HAP-1 (cell line): ENCODE measurements at regions of chr11 and their contacts with region 1.

Region 1: DNA sequence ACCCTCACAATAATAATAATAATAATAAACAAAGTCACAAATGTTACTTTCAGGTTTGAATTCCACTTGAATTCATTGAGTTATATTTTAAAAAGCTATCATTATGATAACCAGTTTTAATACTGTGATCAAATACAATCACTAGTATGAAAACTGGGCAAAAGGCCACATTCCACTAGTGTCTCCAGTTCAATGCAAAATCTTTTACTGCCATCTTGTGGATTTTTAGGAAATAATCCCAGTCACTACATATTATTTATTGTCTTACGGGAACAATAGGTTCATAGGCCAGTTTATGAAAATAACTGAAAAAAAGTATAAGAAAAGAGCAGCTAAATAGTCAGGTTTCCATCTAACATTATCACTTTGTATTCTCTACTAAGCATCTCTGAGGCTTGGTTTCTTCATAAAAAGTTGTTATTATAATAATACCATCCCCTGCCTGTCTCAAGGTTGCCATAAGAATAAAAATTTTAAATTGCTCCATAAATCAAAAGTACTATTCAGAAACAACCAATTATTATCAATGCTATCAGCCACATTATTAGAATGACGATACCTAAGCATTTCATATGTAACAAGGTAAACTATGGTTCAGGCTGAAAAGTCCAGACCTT is 533.9 kb upstream of the CCDC90B start:
- DNase-seq: peak; percentile 9 to 57
- H3K4me3 ChIP-seq: no peak overlapping the region
- H3K4me1 ChIP-seq: no peaks in the 10 kb centered on the region
- H3K27me3 ChIP-seq: peaks cover 9% of the 10 kb centered on the region

Region 2: DNA sequence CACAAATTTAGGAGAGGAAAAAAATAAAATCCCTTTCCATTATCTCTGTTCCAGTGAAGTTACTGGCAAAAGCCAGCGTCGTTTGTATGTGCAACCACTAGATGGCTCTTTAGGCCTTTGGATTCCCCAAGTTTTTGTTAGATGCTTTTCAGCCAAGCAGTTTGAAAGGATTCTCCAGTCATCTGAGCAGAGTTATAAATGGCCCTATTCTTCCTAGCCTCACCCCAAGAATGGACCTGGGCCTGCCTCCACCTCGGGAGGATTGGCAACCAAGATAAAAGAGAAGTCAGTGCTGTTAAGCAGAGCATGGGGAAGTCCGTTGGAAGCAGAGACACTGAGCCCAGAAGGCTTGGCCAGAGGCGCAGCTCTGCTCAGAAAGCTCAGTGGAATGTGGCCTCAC is 1101.7 kb before region 1 on chr11:
- in situ Hi-C with region 1: loop called (anchors 25 kb)
- DNase-seq: peak; percentile 51 to 69
- H3K4me3 ChIP-seq: no peak overlapping the region
- H3K4me1 ChIP-seq: no peaks in the 10 kb centered on the region
- H3K27me3 ChIP-seq: peaks cover 9% of the 10 kb centered on the region; the same call in 1 of the 2 replicates

Region 3: GRCh38 chr11:82867495-82868082 is 952.5 kb before region 1 on chr11:
- in situ Hi-C with region 1: loop called (anchors 25 kb)
- DNase-seq: peak; percentile 87 to 93
- H3K4me3 ChIP-seq: no peak overlapping the region
- H3K4me1 ChIP-seq: peaks cover 14% of the 10 kb centered on the region
- H3K27me3 ChIP-seq: no peaks in the 10 kb centered on the region

Region 4: GRCh38 chr11:83306200-83307080 is 513.6 kb before region 1 on chr11:
- in situ Hi-C with region 1: loop called (anchors 25 kb)
- DNase-seq: no peak
- H3K4me3 ChIP-seq: no peak overlapping the region
- H3K4me1 ChIP-seq: no peaks in the 10 kb centered on the region
- H3K27me3 ChIP-seq: peaks cover 3% of the 10 kb centered on the region

Region 5: DNA sequence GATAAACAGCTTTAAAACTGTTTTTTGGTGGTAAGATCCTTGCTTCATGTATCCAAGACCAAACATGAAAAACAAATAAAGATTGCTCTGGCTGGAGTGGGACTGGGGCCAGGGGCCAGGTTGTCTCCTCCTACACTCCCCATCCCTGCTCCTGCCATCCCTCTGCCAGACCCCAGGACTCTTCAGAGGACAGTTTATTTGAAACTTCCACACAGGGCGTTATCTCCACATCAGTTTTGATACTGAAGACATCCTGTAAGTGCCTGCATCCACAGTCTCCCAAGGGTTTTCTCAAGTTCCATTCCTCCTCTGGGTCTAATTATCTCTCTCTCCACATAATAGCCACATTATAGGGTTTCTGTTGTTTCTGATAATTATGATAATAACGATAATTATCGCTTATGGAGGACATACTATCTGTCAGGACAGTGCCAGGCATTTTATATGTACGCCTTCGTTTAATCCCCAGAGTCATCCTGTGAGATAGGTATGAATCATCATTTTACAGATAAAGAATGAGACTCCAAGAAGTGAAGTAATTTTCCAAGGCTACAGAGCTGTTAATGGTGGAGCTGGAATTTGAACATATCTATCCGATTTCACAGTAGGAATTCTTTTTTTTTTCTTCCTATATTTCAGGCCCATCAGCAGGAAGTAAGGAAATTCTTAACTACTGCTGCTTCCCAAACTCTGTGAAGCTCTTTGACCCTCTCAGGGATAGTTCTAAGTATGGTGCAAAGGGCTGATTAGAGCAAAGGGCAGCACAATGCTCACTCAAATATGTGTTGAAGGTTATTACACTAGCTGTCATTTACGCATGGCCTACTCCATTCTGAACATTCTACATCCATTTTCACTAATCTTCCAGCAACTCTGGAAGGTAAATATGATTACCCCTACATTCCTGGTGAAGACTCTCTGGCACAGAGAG is 45.8 kb before region 1 on chr11:
- in situ Hi-C with region 1: no loop called
- DNase-seq: no peak
- H3K4me3 ChIP-seq: no peak overlapping the region
- H3K4me1 ChIP-seq: no peaks in the 10 kb centered on the region
- H3K27me3 ChIP-seq: peaks cover 4% of the 10 kb centered on the region; the same call in 1 of the 2 replicates